Activated CD8-positive, alpha-beta T cell treated with anti-CD3 and anti-CD28 coated beads, Interleukin-2, amount 10 ng/mL, durations not matched to agents 7 days and 5 days (primary cell): ENCODE measurements at regions of chr3 and their contacts with region 1.

Region 1: DNA sequence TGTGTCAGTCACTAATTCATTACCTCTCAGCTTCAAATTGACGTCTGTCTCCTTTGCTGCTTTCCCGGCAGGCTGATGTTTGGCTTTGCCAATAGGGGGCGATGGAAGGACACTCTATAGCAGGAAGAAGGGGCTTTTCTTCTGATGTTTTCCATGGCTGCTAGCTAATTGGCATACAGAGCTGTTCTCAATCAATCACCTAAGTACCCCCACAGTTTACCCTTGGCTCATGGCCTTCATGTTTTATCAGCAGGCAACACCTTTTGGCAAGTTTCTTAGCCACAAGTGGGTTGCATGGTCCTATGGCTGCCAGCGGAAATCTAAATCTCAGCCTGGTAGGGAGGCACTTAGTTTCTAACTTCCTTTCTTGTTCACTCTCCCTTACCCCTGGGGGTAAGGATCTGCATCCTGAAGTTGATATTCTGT is 45.0 kb downstream of the ESYT3 start:
- DNase-seq: peak; percentile 60
- ATAC-seq: peak; percentile 42
- H3K4me3 Mint-ChIP-seq: no peak overlapping the region
- H3K27ac Mint-ChIP-seq: no peak overlapping the region
- H3K4me1 Mint-ChIP-seq: no peaks in the 10 kb centered on the region
- H3K27me3 Mint-ChIP-seq: peaks cover 8% of the 10 kb centered on the region

Region 2: GRCh38 chr3:138165061-138165460 is 314.4 kb before region 1 on chr3:
- CTCF ChIA-PET with region 1: no interaction called
- POLR2A ChIA-PET with region 1: no interaction called
- DNase-seq: no peak
- ATAC-seq: no peak
- H3K4me3 Mint-ChIP-seq: no peak overlapping the region
- H3K27ac Mint-ChIP-seq: no peak overlapping the region
- H3K4me1 Mint-ChIP-seq: no peaks in the 10 kb centered on the region
- H3K27me3 Mint-ChIP-seq: no peaks in the 10 kb centered on the region

Region 3: DNA sequence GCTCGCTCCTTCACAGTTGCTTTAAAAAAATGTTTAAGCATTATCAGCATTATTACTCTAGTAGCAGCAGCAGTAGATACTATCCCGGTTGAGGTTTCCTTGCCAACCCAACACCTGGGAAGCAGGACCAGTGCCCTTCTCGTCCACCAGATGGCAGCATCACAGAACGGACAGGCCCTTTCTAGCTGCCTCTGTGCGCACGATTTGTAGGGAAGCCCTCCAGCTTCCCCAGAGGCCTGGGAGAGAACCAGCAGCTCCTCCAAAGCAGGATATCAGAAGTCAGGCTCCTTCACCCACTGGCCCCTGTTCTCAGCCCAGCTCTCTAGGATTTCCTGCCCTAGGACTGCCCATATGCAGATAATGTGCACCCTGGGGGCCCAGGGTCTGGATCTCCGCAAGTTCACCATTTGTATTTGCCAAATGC is 61.9 kb before region 1 on chr3:
- CTCF ChIA-PET with region 1: interaction called, 15 read pairs
- POLR2A ChIA-PET with region 1: no interaction called
- DNase-seq: peak; percentile 73
- ATAC-seq: peak; percentile 96
- H3K4me3 Mint-ChIP-seq: no peak overlapping the region
- H3K27ac Mint-ChIP-seq: no peak overlapping the region
- H3K4me1 Mint-ChIP-seq: peaks cover 2% of the 10 kb centered on the region
- H3K27me3 Mint-ChIP-seq: peaks cover 7% of the 10 kb centered on the region

Region 4: GRCh38 chr3:138496436-138496835 is 17.0 kb after region 1 on chr3:
- CTCF ChIA-PET with region 1: interaction called, 10 read pairs
- POLR2A ChIA-PET with region 1: no interaction called
- DNase-seq: no peak
- ATAC-seq: no peak
- H3K4me3 Mint-ChIP-seq: no peak overlapping the region
- H3K27ac Mint-ChIP-seq: no peak overlapping the region
- H3K4me1 Mint-ChIP-seq: no peaks in the 10 kb centered on the region
- H3K27me3 Mint-ChIP-seq: no peaks in the 10 kb centered on the region

Region 5: DNA sequence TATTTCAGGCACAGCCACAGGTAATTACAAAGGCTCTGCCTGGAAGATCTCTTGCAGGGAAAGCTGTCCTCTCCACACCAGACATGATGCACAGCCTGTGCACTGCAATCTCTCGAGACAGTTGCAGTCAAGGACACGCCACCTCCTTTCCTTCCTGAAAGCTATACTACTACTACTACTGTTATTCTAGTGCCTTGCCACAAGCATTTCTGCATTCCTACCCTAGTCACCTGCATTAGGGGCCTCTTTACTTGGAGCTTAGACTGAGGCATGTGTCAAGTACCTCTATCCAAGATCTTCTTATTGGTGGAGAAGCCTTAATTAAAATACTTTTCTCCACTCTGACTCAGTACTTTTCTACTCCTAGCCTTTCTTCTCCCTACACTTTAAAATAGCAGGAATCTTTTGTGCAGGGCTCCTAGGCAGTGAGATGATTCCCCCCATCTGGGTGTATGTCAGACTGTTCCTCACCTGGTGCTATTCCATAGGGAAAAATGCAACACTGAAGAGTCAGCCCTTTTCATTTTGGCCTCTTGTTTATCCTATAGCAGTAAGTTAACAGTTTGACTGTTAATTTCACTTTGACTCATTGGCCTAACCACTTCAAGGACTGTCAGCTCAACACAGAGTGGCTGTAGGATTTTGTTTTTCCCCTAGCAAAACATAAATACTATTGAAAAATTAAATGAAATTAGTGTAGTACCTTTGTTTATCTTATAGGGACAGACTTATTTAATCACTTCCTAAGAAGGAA is 33.8 kb after region 1 on chr3:
- CTCF ChIA-PET with region 1: interaction called, 22 read pairs
- POLR2A ChIA-PET with region 1: no interaction called
- DNase-seq: no peak
- ATAC-seq: peak; percentile 84
- H3K4me3 Mint-ChIP-seq: no peak overlapping the region
- H3K27ac Mint-ChIP-seq: peak overlapping the region; percentile 17
- H3K4me1 Mint-ChIP-seq: peaks cover 24% of the 10 kb centered on the region
- H3K27me3 Mint-ChIP-seq: no peaks in the 10 kb centered on the region